HEK293 (cell line): ENCODE measurements at regions of chr12 and their contacts with region 1.

Region 1: DNA sequence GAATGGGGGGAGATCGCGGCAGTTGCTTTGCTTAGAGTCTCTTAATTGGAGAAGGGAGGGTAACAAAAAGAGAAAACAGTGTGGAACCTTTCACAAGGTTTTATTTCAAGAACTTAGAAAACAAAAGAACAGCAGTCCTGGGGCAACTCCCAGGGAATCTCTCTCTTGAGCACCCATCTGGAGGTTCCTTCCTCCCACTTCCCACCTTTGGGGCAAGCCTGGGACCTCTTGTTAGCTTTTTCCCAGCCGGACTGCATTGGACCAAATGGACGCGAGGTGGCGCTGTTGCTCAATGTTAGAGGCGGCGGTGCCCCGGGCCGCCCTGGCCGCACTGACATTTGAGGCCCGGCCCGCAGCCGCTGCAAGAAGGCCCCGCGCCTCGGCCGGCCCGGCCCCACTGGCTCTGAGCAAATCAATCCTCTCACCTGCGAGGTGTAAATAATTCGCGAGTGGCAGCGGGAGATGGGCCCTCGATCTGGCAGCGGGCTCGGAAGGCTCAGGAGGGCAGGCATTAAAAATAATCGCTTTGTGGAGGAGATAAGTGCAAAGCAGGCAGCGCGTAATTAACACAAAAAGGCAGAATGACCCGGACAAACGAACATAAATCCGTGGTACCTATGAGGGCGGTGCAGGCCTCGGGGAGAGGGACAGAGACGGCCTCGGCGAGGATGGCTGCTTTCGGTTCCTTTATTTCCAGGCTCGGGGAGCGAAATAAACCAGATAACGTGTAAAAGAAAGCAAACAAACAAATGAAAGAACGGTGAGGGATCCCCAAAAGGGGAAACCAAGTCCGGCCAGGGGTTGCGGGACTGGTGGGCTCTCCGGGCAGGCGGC is 2.7 kb upstream of the HOXC8 start:
- H3K4me3 ChIP-seq: no peak overlapping the region
- H3K27ac ChIP-seq: peak overlapping the region; percentile 45; the same call in 1 of the 2 replicates
- H3K4me1 ChIP-seq: peaks cover 40% of the 10 kb centered on the region
- CTCF ChIP-seq: peak; percentile 88

Region 2: DNA sequence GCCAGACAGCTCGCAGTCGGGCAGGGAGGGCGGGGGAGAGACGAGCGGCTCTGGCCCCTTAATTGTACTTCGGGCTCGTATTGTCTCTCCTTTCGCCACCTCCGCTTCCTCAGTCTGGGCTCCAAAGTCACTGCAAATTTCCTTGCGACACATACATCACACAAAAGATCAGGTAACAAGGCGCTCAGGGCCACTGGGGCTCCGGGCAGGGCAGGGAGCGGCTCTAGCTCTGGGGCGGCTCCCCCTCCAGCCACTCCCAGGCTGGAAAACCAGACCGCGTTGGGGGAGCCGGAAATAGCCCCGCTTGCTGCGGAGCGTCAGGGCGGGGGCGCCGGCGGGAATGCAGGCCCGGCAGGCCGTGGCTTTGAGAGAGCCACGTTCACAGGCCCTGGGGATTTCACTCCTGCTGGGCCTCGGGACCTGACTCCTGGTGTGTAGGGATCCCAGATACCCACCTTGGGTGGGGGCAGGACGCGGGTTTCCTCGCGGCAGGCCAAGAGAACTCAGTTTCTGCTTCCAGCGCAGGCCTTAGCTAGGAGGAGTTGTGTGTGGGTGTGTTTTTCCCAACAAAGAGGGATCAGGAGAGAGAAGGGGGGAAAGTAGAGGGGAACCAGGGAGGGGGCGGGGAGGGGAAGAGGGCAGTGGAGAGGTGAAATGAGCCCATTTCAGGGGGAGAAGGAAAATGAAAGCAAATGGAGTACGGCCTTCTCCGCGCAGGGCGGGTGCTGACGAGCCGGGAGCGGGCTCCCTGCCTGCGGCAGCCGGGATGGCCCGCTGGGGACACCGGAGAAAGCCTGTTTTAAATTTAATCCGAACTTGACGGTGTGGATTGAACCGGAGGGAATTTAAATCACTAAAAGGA is 10.5 kb before region 1 on chr12:
- CTCF ChIA-PET with region 1: interaction called, 5 read pairs
- POLR2A ChIA-PET with region 1: interaction called, 19 read pairs
- H3K4me3 ChIP-seq: peak overlapping the region; percentile 61
- H3K27ac ChIP-seq: peak overlapping the region; percentile 98
- H3K4me1 ChIP-seq: peaks cover 32% of the 10 kb centered on the region
- CTCF ChIP-seq: no peak

Region 3: DNA sequence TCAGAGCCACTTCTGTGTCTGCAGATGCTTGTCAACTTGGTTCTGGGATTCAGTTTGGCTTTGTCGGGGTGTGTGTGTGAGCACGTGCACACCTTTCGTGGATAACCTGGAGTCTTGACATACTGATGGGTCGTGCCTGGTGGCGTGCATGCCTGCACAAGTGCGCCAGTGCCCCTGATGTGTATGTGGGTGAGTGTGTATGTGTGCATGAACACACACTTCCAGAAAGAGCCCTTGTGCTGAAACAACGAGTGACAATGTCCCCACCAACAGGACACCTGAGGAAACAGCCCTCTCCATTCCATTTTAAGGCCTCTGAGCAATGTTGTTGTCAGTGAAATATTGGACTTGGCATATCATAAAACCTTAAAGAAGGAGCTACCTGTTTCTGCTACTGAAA is 128.8 kb after region 1 on chr12:
- CTCF ChIA-PET with region 1: interaction called, 11 read pairs
- POLR2A ChIA-PET with region 1: interaction called, 6 read pairs
- H3K4me3 ChIP-seq: no peak overlapping the region
- H3K27ac ChIP-seq: peak overlapping the region; percentile 17; the same call in 1 of the 2 replicates
- H3K4me1 ChIP-seq: peaks cover 12% of the 10 kb centered on the region
- CTCF ChIP-seq: peak; percentile 70

Region 4: DNA sequence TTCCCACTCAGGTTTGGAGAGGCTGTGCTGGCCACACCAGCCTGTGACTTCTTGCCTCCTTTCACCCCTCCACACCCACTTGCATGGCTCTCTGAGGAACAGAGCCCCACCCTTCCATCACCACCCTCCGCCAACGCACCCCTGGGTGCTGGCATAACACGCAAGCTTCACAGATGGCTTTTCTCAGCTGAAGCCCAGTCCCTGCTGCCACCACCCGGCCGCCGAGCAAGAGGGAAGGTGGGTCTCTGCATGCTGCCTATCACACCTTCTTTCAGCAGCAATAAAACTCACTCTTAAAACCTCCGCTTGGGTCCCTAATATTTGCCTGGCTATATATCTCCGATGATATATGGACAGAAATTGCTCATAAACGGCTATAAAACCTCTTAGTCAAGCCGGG is 141.1 kb after region 1 on chr12:
- CTCF ChIA-PET with region 1: no interaction called
- POLR2A ChIA-PET with region 1: no interaction called
- H3K4me3 ChIP-seq: no peak overlapping the region
- H3K27ac ChIP-seq: no peak overlapping the region
- H3K4me1 ChIP-seq: no peaks in the 10 kb centered on the region; the same call in 1 of the 2 replicates
- CTCF ChIP-seq: peak; percentile 80

Region 5: DNA sequence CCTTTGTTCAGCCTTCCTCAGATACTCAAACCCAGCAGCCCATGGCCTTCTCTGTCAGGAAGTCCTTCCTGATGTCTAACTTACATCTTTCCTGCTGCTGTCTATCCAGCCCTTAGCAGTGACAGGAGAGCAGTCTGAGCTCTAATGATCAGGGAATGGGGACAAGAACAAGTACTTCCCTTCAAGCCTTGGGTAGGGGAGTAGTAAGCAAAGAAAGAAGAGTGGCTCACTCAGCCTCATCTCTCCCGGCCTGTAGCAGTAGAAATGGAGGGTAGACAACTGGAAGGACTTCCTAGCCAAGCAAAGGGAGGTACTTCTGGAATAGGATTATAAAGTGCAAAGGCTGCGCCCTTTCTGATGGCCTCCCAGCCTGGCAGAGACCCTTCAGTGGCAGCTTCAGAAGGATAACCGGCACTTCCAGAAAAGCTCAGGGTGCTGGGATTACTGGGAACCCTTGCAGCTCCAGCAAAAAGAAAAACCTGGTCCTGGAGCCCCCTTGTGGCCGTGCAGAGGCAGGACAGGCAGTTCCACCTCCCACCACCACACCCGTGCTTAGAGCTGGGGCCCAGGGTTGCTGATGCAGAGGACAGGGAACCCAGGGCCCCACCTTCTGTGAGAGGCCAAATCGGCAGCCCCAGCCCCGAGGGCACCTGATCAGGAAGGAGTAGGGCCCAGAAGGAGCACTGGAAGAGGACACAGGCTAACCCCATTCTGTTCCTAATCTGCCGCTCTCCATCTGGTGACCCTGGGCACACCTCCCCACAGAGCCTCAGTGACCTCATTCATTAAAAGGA is 195.1 kb after region 1 on chr12:
- CTCF ChIA-PET with region 1: interaction called, 111 read pairs
- POLR2A ChIA-PET with region 1: interaction called, 10 read pairs
- H3K4me3 ChIP-seq: no peak overlapping the region
- H3K27ac ChIP-seq: no peak overlapping the region
- H3K4me1 ChIP-seq: peaks cover 10% of the 10 kb centered on the region
- CTCF ChIP-seq: peak; percentile 94